ENCODE measurements at regions of chr6 and their contacts with region 1.

Region 1: GRCh38 chr6:149233056-149233715 is 84.3 kb upstream of the TAB2 start:
- DNase-seq: peak; percentile 94
- ATAC-seq: peak; percentile 89
- H3K4me3 ChIP-seq: peak overlapping the region; percentile 55
- H3K27ac ChIP-seq: peak overlapping the region; percentile 100
- H3K4me1 ChIP-seq: peaks cover 47% of the 10 kb centered on the region
- H3K27me3 ChIP-seq: no peaks in the 10 kb centered on the region
- CTCF ChIP-seq: no peak

Region 2: DNA sequence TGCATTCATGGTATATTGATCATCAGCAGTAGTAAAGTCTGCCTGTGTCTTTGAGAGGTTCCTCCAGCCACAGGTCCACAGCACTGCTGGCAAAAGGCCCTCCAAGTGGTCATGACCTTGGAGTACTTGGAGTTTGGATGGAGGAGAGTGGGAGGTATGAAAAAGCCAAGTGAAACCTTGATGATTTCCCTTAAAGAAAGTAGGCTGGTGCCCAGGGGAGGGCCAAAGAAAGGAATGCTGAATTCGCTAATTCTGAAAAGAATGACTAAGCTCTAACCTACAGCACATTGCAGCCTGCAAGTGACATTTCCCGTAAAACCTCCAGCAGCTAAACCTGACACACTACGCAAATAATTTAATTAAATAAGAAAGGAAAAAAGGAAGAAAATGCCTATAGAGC is 139.0 kb before region 1 on chr6:
- CTCF ChIA-PET with region 1: no interaction called
- POLR2A ChIA-PET with region 1: no interaction called
- intact Hi-C with region 1: loop called (anchors 1 kb)
- DNase-seq: peak; percentile 62
- ATAC-seq: peak; percentile 92
- H3K4me3 ChIP-seq: no peak overlapping the region
- H3K27ac ChIP-seq: 0 out of 2 replicates have a peak overlapping the region, but pooled peaks have one; percentile 11
- H3K4me1 ChIP-seq: peaks cover 19% of the 10 kb centered on the region
- H3K27me3 ChIP-seq: no peaks in the 10 kb centered on the region
- CTCF ChIP-seq: no peak

Region 3: DNA sequence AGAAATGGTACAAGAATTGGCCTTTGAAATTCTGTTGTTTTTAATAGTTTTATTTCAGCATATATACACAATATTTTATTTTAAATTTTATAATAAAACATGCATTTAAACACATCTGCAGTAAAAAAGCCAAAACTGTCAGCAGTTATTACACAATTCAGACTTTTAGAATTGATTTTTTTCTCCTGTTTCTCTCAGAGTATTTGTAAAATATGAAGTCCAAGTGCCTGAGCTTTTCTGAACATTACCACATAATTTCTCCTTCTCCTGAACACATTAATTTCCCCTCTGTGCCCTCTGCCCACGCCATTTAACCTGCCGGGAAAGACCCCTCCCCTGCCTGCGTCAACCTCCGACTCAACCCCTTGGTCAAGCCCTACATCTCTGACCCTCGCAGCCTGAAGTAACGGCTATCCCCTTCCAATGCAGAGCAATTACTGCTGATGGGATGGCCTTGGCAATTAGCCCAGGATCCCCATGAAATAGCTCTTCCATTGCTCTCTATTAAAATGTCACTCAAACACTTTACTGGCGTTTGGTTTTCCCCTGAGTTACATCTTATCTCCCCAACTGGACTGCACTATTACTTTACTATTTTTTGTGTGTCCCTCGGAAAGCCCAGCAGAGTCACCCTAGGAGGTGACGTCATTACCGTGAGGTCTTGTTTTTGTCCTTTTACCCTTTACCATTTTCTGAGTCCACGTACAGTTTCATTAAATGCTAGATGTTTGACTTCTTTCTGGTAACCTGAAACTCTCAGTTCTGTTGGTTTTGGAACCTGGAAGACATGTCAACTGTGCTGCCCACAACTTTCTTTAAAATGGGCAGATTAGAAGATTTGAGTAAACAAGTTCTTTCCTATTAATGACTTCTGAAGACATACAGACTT is 62.4 kb before region 1 on chr6:
- CTCF ChIA-PET with region 1: no interaction called
- POLR2A ChIA-PET with region 1: no interaction called
- intact Hi-C with region 1: no loop called
- DNase-seq: no peak
- ATAC-seq: no peak
- H3K4me3 ChIP-seq: no peak overlapping the region
- H3K27ac ChIP-seq: peak overlapping the region; percentile 65
- H3K4me1 ChIP-seq: peaks cover 30% of the 10 kb centered on the region
- H3K27me3 ChIP-seq: no peaks in the 10 kb centered on the region
- CTCF ChIP-seq: no peak

Region 4: GRCh38 chr6:149316798-149317655 is 83.8 kb after region 1 on chr6:
- CTCF ChIA-PET with region 1: no interaction called
- POLR2A ChIA-PET with region 1: no interaction called
- intact Hi-C with region 1: loop called (anchors 2 kb)
- DNase-seq: peak; percentile 86
- ATAC-seq: peak; percentile 83
- H3K4me3 ChIP-seq: peak overlapping the region; percentile 93
- H3K27ac ChIP-seq: peak overlapping the region; percentile 69
- H3K4me1 ChIP-seq: peaks cover 24% of the 10 kb centered on the region
- H3K27me3 ChIP-seq: no peaks in the 10 kb centered on the region
- CTCF ChIP-seq: no peak

Region 5: GRCh38 chr6:149335924-149336608 is 102.9 kb after region 1 on chr6:
- CTCF ChIA-PET with region 1: no interaction called
- POLR2A ChIA-PET with region 1: no interaction called
- intact Hi-C with region 1: loop called (anchors 5 kb)
- DNase-seq: peak; percentile 81
- ATAC-seq: peak; percentile 35
- H3K4me3 ChIP-seq: no peak overlapping the region
- H3K27ac ChIP-seq: peak overlapping the region; percentile 91
- H3K4me1 ChIP-seq: peaks cover 75% of the 10 kb centered on the region
- H3K27me3 ChIP-seq: no peaks in the 10 kb centered on the region
- CTCF ChIP-seq: no peak

Region 6: DNA sequence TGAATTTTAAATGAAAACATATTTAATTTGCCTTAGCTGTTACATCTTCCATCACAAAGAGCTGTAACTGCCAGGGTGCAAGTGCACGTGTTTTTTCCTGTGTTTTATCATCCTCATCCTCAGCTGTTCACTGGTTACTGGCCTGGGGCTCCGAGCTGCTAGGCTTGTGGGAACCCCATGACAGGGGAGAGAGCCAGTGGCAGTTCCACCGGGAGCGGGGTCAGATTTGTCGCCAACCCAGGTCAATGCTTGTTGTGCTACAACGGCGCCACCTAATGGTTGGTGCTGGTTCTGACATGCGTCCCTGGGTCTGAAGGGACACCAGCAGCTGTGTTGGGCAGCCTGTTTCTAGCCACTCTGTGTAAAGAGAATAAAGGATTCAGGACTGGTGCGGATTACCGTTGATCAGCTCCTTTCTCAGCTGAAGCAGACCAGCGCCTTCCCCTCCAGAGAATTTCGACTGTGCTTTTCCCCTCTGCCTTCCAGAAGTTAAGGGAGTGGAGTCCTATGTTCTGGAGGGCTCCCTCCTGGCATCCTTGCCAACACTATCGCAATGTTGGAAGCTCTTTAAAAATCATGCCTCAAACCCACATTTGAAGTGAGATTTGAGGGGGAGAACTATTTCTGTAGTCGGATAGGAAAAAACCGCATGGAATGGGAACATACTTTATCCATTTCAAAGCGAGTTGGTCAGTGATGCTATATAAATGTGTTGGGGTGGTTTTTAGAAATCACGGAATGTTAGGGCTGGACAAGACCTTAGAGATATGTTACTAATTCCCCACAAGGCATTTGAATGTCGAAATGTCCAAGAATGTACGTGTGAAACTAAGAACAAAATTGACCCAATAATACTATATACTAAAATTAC is 199.0 kb after region 1 on chr6:
- CTCF ChIA-PET with region 1: no interaction called
- POLR2A ChIA-PET with region 1: no interaction called
- intact Hi-C with region 1: loop called (anchors 2 kb)
- DNase-seq: peak; percentile 87
- ATAC-seq: peak; percentile 94
- H3K4me3 ChIP-seq: no peak overlapping the region
- H3K27ac ChIP-seq: no peak overlapping the region
- H3K4me1 ChIP-seq: no peaks in the 10 kb centered on the region
- H3K27me3 ChIP-seq: no peaks in the 10 kb centered on the region
- CTCF ChIP-seq: peak; percentile 89